Head of caudate nucleus (tissue), 42 donors: ENCODE measurements at regions of chr3 and their contacts with region 1.

Region 1: DNA sequence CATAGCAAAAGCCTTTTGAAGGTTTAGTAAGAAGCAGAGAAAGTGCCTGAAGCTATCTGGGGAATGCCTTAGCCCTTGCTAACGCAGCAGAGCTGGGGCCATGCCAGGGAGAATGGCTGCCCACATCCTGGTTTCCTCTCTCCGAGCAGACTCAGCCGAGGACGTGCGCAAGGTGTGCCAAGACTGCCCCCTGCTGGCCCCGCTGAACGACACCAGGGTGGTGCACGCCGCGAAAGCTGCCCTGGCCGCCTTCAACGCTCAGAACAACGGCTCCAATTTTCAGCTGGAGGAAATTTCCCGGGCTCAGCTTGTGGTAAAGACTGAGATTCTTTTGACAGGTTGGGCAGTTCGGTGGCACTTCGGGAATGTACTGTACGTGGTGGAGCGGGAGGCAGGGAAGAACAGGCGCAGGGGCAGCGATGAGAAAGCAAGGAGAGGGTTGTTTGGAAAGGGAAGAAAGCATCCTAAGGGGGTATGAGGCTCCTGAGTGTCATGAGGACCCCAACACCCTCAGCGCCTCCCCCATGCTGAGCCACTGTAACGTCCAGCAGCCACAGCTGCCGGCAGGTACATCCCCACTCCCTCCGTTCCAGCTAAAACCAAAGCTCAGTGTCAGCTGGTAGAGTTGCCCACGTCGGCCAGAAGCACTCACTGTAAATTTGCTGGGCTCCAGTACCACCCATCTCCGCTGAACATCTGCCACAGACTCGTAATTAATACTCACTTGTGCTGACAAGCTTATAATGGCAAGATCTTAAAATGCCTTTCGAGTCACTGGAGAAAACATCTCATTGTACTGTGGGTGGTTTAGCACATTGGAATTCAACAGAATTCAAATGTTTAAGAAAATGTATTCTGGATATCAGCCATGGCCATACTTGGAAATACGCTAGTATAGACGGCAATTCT is 4.4 kb downstream of the AHSG start:
- DNase-seq: peak; percentile 72 to 93 (median 88)

Region 2: GRCh38 chr3:186502138-186502948 is 114.9 kb before region 1 on chr3:
- intact Hi-C with region 1: no loop called
- DNase-seq: peak in 3 of 42 donors; percentile 20 to 52 (median 48)

Region 3: GRCh38 chr3:186815435-186815834 is 198.1 kb after region 1 on chr3:
- intact Hi-C with region 1: no loop called
- DNase-seq: no peak

Region 4: DNA sequence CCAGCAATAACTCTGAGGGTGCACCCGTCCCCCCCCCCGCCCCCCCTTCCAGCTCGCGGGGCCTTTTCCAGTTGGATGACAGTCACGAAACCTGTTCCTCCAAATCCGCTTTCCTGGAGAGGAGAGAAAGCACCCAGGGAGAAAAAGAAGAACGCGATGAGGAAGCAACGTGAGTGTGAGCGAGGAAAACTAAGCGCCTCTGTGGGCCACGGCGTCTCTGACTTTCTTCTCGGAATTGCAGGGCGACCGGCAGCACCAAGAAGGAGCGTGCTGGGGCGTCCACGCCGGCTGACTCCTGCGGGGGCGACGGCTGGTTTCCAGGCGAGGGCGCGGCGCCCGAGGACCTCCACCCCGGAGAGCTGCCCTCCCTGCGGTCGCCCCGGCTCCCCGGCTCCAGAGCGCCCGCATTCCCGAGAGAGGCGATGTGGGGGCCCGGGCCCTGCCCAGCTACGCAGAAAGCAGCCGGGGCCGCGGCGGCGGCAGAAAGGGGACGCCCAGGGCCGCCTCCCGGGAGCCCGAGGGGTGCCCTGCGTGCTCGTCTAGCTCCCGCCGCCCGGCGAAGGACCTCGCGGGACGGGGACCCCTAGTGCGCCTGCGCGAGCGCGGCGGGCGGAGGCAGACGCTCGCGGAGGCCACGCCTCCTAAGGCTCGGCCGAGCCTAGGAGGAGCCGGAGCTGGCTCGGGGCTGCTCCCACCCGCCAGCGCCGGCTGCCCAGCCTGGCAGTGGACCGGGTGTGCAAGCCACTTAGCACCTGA is 209.9 kb after region 1 on chr3:
- intact Hi-C with region 1: loop called (anchors 5 kb)
- DNase-seq: peak; percentile 34 to 92 (median 84)